Naive thymus-derived CD8-positive, alpha-beta T cell (primary cell): ENCODE measurements at regions of chr9 and their contacts with region 1.

Region 1: DNA sequence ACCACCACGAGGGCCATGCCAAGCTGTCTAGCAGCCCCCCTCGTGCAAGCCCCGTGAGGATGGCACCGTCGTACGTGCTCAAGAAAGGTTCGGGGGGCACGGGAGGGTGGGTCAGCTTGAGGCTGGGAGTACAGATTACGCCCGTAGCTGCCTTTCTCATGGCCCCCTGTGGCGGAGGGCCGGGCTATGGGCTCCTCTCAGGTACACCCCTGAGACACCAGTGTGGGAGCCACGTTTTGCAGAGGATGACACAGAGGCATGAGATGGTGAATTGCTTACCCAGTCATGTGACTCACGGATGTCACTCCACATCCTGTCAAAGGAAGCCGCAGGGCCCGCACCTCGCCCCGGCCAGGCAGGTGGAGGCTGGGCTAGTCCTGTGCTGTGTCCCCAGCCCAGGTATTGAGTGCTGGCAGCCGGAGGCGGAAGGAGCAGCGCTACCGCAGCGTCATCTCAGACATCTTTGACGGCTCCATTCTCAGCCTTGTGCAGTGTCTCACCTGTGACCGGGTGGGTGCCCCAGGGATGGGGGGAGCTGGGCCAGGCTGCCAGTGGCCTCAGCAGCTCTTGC is 33.7 kb downstream of the USP20 start:
- DNase-seq: peak; percentile 72 to 96 (median 94)
- ATAC-seq: peak; percentile 83 to 90
- H3K4me3 Mint-ChIP-seq: peak overlapping the region; percentile 19 to 79 (median 64)
- H3K27ac Mint-ChIP-seq: peak overlapping the region; percentile 85 to 96 (median 94)
- H3K4me1 Mint-ChIP-seq: peaks cover 32 to 87% (median 78%) of the 10 kb centered on the region in 4 donors
- H3K27me3 Mint-ChIP-seq: no peaks in the 10 kb centered on the region

Region 2: DNA sequence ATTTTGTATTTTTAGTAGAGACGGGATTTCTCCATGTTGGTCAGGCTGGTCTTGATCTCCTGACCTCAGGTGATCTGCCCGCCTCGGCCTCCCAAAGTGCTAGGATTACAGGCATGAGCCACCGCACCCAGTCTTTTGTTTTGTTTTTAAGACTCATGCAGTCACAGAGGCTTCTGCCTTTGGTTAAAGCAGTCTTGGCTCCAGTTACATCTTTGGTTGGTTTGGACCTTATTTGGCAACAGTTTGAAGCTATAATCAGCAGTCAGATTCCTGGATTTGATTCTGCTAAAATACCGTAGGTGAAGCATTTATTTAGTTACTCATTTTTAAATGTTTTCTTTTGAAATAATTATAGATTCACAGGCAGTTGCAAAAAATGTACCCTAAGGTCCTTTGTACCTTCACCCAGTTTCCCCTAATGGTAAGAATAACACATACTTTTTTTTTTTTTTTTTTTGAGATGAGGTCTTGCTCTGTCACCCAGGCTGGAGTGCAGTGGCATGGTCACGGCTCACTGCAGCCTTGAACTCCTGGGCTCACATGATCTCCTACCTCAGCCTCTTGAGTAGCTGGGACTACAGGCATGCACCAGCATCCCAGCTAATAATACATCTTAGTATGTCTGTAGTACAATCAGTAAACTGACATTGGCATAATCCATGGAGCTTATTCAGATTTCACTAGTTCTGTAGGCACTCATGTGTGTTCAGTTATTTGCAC is 18.0 kb before region 1 on chr9:
- POLR2A ChIA-PET with region 1: interaction called, 10 read pairs
- DNase-seq: no peak
- ATAC-seq: peak in 1 of 2 donors; percentile 19
- H3K4me3 Mint-ChIP-seq: no peak overlapping the region
- H3K27ac Mint-ChIP-seq: peak overlapping the region in 6 of 10 donors; percentile 21 to 83 (median 44)
- H3K4me1 Mint-ChIP-seq: peaks cover 20 to 83% (median 45%) of the 10 kb centered on the region in 4 donors
- H3K27me3 Mint-ChIP-seq: no peaks in the 10 kb centered on the region